CD8-positive, alpha-beta T cell (primary cell): ENCODE measurements at regions of chr16 and their contacts with region 1.

Region 1: GRCh38 chr16:23877107-23878090 is 41.6 kb downstream of the PRKCB start:
- DNase-seq: peak in 3 of 9 experiments; percentile 27 to 48 (median 39)
- ATAC-seq: peak; percentile 65
- H3K4me3 ChIP-seq: no peak overlapping the region
- H3K4me3 Mint-ChIP-seq: no peak overlapping the region
- H3K27ac ChIP-seq: no peak overlapping the region
- H3K27ac Mint-ChIP-seq: peak overlapping the region; percentile 64
- H3K4me1 ChIP-seq: peaks cover 72% of the 10 kb centered on the region
- H3K4me1 Mint-ChIP-seq: peaks cover 81% of the 10 kb centered on the region
- H3K27me3 ChIP-seq: no peaks in the 10 kb centered on the region
- H3K27me3 Mint-ChIP-seq: no peaks in the 10 kb centered on the region
- CTCF ChIP-seq: peak; percentile 40

Region 2: DNA sequence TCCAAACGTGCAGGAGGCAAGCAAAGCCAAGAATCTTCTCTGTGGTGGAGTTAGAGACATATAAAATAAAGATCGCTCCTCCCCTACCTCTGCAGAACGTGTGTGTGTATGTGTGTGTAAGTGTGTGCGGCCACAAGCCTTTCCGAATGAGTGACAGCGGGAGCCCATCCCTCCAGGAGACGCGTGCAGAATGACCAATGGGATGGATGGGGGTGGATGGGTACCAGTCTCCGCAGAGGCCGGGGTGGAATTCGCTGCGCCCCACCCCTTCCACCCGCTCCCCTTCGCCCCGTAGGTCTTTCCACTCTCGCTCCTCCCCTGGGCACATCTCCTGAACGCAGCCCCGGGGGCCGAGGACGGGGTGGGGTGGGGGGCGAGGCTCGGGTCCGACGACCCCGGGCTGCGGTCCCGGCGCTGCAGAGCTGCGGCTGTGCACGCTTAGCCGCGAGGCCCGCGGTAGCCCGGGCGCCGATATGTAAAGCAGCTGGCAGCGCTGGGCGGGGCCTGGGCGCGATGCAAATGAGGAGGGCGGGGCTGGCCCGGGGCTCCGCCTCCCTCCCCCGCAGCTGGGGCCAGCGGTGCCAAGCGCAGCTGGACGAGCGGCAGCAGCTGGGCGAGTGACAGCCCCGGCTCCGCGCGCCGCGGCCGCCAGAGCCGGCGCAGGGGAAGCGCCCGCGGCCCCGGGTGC is 41.9 kb before region 1 on chr16 and contains the start of gene PRKCB:
- CTCF ChIA-PET with region 1: interaction called, 5 read pairs
- POLR2A ChIA-PET with region 1: interaction called, 6 read pairs
- intact Hi-C with region 1: loop called in 1 of 2 experiments (anchors 5 kb)
- DNase-seq: peak; percentile 80 to 94 (median 88)
- ATAC-seq: peak; percentile 88
- H3K4me3 ChIP-seq: peak within 1 kb of the TSS; percentile 71 to 93
- H3K4me3 Mint-ChIP-seq: peak within 1 kb of the TSS; percentile 99
- H3K27ac ChIP-seq: peak within 1 kb of the TSS; percentile 40 to 44
- H3K27ac Mint-ChIP-seq: peak within 1 kb of the TSS; percentile 95
- H3K4me1 ChIP-seq: peaks cover 48% of the 10 kb centered on the region
- H3K4me1 Mint-ChIP-seq: peaks cover 55% of the 10 kb centered on the region
- H3K27me3 ChIP-seq: no peaks in the 10 kb centered on the region
- H3K27me3 Mint-ChIP-seq: no peaks in the 10 kb centered on the region
- CTCF ChIP-seq: no peak
- total RNA-seq, gene PRKCB: 62.8 to 64.4 TPM

Region 3: DNA sequence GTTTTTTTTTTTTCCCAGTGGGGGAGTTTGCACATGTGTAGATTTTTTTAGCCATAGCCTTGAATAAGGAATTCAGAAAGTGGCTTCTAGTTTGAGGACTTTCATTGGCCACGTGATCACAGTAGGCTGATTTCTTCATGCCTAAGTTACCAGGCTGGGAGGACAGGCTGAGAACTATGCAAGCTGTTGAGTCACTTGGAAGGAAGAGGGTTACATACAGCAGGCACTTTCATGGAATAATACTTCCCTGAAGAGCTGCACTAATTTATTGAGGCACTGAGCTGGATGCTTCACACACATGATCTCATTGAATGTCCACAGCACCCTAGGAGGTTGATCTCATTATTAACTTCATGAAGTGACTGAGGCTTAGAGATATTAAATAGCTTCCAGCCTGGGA is 18.9 kb before region 1 on chr16:
- CTCF ChIA-PET with region 1: interaction called, 14 read pairs
- POLR2A ChIA-PET with region 1: interaction called, 6 read pairs
- intact Hi-C with region 1: no loop called
- DNase-seq: peak in 1 of 9 experiments; percentile 18
- ATAC-seq: no peak
- H3K4me3 ChIP-seq: no peak overlapping the region
- H3K4me3 Mint-ChIP-seq: no peak overlapping the region
- H3K27ac ChIP-seq: no peak overlapping the region
- H3K27ac Mint-ChIP-seq: peak overlapping the region; percentile 69
- H3K4me1 ChIP-seq: peaks cover 54% of the 10 kb centered on the region
- H3K4me1 Mint-ChIP-seq: peaks cover 87% of the 10 kb centered on the region
- H3K27me3 ChIP-seq: no peaks in the 10 kb centered on the region
- H3K27me3 Mint-ChIP-seq: no peaks in the 10 kb centered on the region
- CTCF ChIP-seq: no peak

Region 4: DNA sequence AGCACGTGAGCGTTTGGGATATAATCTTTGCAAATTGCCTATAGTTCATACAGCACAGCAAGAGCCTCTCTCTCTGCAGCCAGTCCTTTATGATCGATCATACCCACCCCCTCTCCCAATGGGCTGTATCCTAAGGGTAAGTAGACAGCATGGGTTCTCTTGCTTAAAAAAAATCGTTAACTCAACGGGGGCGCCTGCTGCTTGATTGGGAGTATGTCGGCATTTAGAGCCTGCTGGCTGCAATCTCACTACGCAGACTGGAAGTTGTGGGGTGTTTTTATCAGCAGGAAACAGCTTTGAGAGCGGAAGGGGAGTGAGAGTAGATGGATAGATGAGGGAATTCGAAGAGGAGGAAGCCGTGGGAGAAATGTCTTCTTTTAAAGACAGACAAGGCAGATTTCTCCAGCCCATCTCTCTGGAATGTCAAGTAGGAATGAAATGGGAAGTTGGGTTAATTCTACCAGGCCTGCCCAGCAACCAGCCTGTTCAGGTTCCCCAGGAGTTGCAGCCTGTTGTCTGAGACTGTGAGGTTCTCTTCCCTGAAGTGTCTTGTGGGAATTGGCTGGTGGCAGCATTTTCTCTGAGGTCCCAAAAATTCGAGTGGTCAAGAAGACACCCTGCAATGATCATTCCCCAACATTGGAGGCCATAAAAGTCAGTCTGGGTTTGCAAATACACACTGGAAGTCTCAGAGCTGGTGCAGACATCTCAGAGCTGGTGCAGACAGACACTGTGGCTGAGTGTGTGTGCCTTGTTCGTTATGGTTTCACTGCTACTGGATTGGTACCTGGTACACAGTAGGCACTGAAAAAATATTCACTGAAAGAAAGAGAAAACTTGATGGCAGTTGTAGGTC is 24.0 kb after region 1 on chr16:
- CTCF ChIA-PET with region 1: interaction called, 28 read pairs
- POLR2A ChIA-PET with region 1: interaction called, 5 read pairs
- intact Hi-C with region 1: no loop called
- DNase-seq: peak in 1 of 9 experiments; percentile 14
- ATAC-seq: no peak
- H3K4me3 ChIP-seq: no peak overlapping the region
- H3K4me3 Mint-ChIP-seq: peak overlapping the region; percentile 57
- H3K27ac ChIP-seq: no peak overlapping the region
- H3K27ac Mint-ChIP-seq: peak overlapping the region; percentile 77
- H3K4me1 ChIP-seq: peaks cover 51% of the 10 kb centered on the region
- H3K4me1 Mint-ChIP-seq: peaks cover 83% of the 10 kb centered on the region
- H3K27me3 ChIP-seq: no peaks in the 10 kb centered on the region
- H3K27me3 Mint-ChIP-seq: no peaks in the 10 kb centered on the region
- CTCF ChIP-seq: no peak

Region 5: DNA sequence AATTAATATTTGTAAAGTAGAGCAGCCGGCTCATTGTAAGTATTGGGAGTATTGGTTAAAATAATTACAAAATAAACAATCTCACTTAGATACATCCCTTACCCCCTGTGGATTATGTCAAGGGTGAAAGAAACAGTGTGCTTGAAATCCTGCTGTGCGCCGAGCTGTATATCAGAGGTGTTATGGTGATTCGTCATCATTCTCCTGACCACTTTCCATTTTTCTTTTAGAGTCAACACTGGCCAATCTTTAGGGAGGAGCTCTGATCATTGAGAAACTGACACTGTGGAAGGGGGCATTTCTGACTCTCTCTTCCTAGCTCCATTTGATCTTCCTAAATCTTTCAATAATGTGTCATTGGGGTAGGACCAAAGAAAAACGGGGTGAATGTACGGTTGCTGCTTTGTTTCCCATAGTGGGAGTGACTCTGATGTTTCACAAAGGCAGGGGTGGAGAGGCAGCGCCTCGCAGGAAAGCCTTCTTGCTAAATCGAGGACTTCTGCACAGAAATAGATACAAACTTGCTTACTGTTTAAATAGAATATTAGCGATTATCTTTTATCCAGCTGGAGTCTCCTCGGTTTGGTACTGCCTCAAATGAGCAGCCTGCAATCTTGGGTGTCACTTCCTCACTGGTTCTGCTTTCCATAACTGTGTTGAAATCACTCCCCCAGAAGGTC is 81.8 kb after region 1 on chr16:
- CTCF ChIA-PET with region 1: interaction called, 10 read pairs
- POLR2A ChIA-PET with region 1: interaction called, 3 read pairs
- intact Hi-C with region 1: no loop called
- DNase-seq: no peak
- ATAC-seq: no peak
- H3K4me3 ChIP-seq: no peak overlapping the region
- H3K4me3 Mint-ChIP-seq: peak overlapping the region; percentile 69
- H3K27ac ChIP-seq: no peak overlapping the region
- H3K27ac Mint-ChIP-seq: peak overlapping the region; percentile 88
- H3K4me1 ChIP-seq: peaks cover 45% of the 10 kb centered on the region
- H3K4me1 Mint-ChIP-seq: peaks cover 80% of the 10 kb centered on the region
- H3K27me3 ChIP-seq: no peaks in the 10 kb centered on the region
- H3K27me3 Mint-ChIP-seq: no peaks in the 10 kb centered on the region
- CTCF ChIP-seq: no peak

Region 6: DNA sequence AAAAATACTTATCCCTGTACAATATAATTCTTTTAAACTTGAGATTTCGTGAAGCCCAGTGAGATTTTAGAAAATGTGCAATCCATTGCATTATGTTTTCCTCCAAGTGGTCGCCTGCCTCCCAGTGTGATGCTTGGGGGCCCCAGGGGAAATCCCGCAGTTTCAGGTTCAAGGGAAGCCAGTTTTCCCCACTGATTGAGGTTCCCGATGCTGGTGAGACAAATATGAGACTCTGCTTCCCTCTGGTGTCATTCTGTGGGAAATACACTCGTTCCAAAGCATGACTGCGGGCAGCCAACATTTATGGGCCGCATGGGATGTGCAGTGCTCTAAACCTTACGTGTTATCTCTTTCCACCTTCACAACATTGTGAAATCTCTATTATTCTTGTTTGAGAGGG is 159.2 kb after region 1 on chr16:
- CTCF ChIA-PET with region 1: interaction called, 62 read pairs
- POLR2A ChIA-PET with region 1: interaction called, 5 read pairs
- intact Hi-C with region 1: loop called (anchors 1 to 2 kb)
- DNase-seq: peak in 6 of 9 experiments; percentile 14 to 73 (median 46)
- ATAC-seq: peak; percentile 56
- H3K4me3 ChIP-seq: no peak overlapping the region
- H3K4me3 Mint-ChIP-seq: peak overlapping the region; percentile 49
- H3K27ac ChIP-seq: no peak overlapping the region
- H3K27ac Mint-ChIP-seq: no peak overlapping the region
- H3K4me1 ChIP-seq: peaks cover 50% of the 10 kb centered on the region
- H3K4me1 Mint-ChIP-seq: peaks cover 48% of the 10 kb centered on the region
- H3K27me3 ChIP-seq: no peaks in the 10 kb centered on the region
- H3K27me3 Mint-ChIP-seq: no peaks in the 10 kb centered on the region
- CTCF ChIP-seq: peak; percentile 82